ENCODE measurements at regions of chr5 and their contacts with region 1.

Region 1: GRCh38 chr5:147935032-147935431 is 28.7 kb upstream of the C5orf46 start:
- DNase-seq: no peak
- H3K4me3 ChIP-seq: no peak overlapping the region
- H3K27ac ChIP-seq: no peak overlapping the region
- H3K4me1 ChIP-seq: no peaks in the 10 kb centered on the region
- H3K27me3 ChIP-seq: no peaks in the 10 kb centered on the region
- CTCF ChIP-seq: peak in 4 of 6 experiments; percentile 49 to 77 (median 62)
- POLR2A ChIP-seq: no peak

Region 2: GRCh38 chr5:147857302-147858129 is 77.5 kb before region 1 on chr5:
- intact Hi-C with region 1: loop called (anchors 10 kb)
- DNase-seq: peak; percentile 59 to 67
- H3K4me3 ChIP-seq: no peak overlapping the region
- H3K27ac ChIP-seq: no peak overlapping the region
- H3K4me1 ChIP-seq: no peaks in the 10 kb centered on the region
- H3K27me3 ChIP-seq: no peaks in the 10 kb centered on the region
- CTCF ChIP-seq: peak; percentile 48 to 81 (median 71)
- POLR2A ChIP-seq: no peak

Region 3: DNA sequence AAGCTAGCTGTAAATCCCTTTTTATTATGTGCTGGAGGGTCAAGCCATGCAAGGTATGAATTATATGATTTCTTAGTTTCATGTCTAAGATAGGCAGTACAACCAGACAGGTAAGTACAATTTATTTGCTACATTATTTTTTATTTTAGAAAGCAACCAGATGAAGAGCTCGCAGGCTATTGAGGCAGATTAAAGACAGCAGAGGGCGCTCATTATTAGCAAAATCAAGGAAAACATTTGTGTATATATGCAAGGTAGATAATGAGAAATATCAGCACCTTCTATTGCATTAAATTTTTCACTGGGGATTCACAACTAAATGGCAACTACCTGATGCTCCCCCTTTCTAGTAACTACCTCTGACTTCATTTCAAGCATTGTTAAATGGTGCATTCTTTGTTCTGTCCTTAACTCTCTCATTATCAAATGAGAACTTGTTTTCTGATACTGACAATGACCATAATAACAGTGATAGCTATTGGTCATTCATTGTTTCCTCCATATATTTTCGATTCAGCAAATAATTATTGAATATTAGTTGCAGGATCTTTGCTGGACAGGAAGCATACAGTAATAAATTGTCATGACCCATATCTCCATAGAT is 47.9 kb before region 1 on chr5:
- intact Hi-C with region 1: loop called (anchors 5 kb)
- DNase-seq: peak; percentile 4 to 22
- H3K4me3 ChIP-seq: no peak overlapping the region
- H3K27ac ChIP-seq: no peak overlapping the region
- H3K4me1 ChIP-seq: no peaks in the 10 kb centered on the region
- H3K27me3 ChIP-seq: no peaks in the 10 kb centered on the region
- CTCF ChIP-seq: peak; percentile 19 to 65 (median 52)
- POLR2A ChIP-seq: no peak